Activated B cell treated with CpG ODN at 0.5 μM for 24 hours (primary cell): ENCODE measurements at regions of chr13 and their contacts with region 1.

Region 1: DNA sequence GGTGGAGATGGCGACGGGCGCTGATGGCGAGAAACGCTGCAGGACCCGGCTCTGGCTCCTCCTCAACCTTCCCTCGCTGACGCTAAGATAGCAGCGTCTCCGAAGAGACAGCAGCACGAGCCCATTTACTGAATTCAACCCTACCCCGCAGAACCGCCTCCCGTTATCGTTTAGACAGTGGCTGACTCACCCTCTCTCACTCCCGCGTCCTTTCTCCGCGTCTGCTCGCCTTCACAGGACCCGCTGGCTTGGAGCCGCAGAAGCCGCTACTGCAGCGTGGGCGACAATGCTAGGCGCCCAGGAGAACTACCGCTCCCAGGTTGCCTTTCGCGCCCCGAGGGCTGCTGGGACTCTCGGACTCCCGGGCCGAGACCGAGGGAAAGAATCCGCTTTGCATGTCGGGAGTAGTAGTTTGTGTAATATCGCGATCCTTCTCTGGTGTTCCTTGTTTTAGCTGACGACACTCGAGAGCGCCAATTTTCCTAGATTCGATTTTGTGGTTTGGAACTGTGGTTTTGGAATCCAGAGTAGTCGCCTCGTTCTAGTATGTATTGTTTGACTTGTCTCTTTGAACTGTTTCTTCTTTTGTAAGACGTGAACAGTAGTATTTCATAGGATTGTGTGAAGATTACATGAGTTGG is at the start of gene KBTBD6:
- DNase-seq: peak; percentile 83
- ATAC-seq: peak; percentile 97
- H3K4me3 Mint-ChIP-seq: peak within 1 kb of the TSS; percentile 98
- H3K27ac Mint-ChIP-seq: peak within 1 kb of the TSS; percentile 91
- H3K4me1 Mint-ChIP-seq: peaks cover 47% of the 10 kb centered on the region
- H3K27me3 Mint-ChIP-seq: no peaks in the 10 kb centered on the region
- CTCF ChIP-seq: no peak
- total RNA-seq, gene KBTBD6: 5.1 and 6.0 TPM in 2 replicates

Region 2: DNA sequence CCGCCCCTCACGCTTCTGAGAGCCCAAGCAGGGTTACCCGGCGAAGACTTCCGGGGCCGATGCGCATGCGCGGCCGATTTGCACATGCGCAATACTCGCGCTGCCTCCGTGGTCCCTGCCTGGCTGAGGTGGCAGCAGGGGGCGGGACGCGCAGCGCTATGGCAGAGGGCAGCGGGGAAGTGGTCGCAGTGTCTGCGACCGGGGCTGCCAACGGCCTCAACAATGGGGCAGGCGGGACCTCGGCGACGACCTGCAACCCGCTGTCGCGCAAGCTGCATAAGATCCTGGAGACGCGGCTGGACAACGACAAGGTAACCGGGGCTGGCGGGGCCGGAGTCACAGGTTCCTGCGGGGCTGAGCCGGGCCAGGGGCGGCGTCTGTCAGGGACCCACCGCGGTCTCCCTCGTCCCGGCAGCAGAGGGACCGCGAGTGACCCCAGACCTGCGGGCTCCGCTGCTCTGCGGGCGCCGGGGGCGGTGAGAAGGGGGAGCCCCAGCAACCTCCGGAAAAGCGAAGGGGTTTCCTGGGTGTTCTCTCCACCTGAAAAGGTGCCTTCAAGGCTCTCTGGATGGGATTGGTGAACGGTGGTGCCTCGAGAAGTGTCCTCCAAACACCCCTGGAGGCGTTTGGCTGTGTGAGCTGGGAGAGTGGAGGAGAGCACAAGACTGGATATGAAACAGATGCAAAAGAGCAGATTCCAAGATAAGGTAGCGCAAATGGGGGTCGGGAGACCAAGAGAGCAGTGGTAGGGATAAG is 1476.9 kb before region 1 on chr13 and contains the start of gene COG6:
- CTCF ChIA-PET with region 1: no interaction called
- POLR2A ChIA-PET with region 1: no interaction called
- intact Hi-C with region 1: loop called (anchors 1 kb)
- DNase-seq: peak; percentile 99
- ATAC-seq: peak; percentile 91
- H3K4me3 Mint-ChIP-seq: peak within 1 kb of the TSS; percentile 91
- H3K27ac Mint-ChIP-seq: peak within 1 kb of the TSS; percentile 85
- H3K4me1 Mint-ChIP-seq: peaks cover 26% of the 10 kb centered on the region
- H3K27me3 Mint-ChIP-seq: peaks cover 2% of the 10 kb centered on the region
- CTCF ChIP-seq: no peak
- total RNA-seq, gene COG6: 28.9 and 29.6 TPM in 2 replicates

Region 3: GRCh38 chr13:41075034-41075433 is 57.6 kb before region 1 on chr13:
- CTCF ChIA-PET with region 1: interaction called, 4 read pairs
- POLR2A ChIA-PET with region 1: no interaction called
- intact Hi-C with region 1: loop called (anchors 5 kb)
- DNase-seq: no peak
- ATAC-seq: peak; percentile 58
- H3K4me3 Mint-ChIP-seq: no peak overlapping the region
- H3K27ac Mint-ChIP-seq: no peak overlapping the region
- H3K4me1 Mint-ChIP-seq: no peaks in the 10 kb centered on the region
- H3K27me3 Mint-ChIP-seq: no peaks in the 10 kb centered on the region
- CTCF ChIP-seq: no peak

Region 4: GRCh38 chr13:41193919-41194824 is 61.5 kb after region 1 on chr13 and contains the start of gene KBTBD7:
- CTCF ChIA-PET with region 1: no interaction called
- POLR2A ChIA-PET with region 1: interaction called, 7 read pairs
- intact Hi-C with region 1: loop called (anchors 1 kb)
- DNase-seq: peak; percentile 85
- ATAC-seq: peak; percentile 92
- H3K4me3 Mint-ChIP-seq: peak within 1 kb of the TSS; percentile 93
- H3K27ac Mint-ChIP-seq: peak within 1 kb of the TSS; percentile 94
- H3K4me1 Mint-ChIP-seq: peaks cover 54% of the 10 kb centered on the region
- H3K27me3 Mint-ChIP-seq: no peaks in the 10 kb centered on the region
- CTCF ChIP-seq: no peak
- total RNA-seq, gene KBTBD7: 5.2 and 6.4 TPM in 2 replicates

Region 5: GRCh38 chr13:41199526-41199925 is 66.9 kb after region 1 on chr13:
- CTCF ChIA-PET with region 1: no interaction called
- POLR2A ChIA-PET with region 1: interaction called, 7 read pairs
- intact Hi-C with region 1: loop called (anchors 1 kb)
- DNase-seq: no peak
- ATAC-seq: peak; percentile 90
- H3K4me3 Mint-ChIP-seq: peak overlapping the region; percentile 55
- H3K27ac Mint-ChIP-seq: peak overlapping the region; percentile 87
- H3K4me1 Mint-ChIP-seq: peaks cover 47% of the 10 kb centered on the region
- H3K27me3 Mint-ChIP-seq: no peaks in the 10 kb centered on the region
- CTCF ChIP-seq: no peak

Region 6: GRCh38 chr13:41299316-41300094 is 166.9 kb after region 1 on chr13:
- CTCF ChIA-PET with region 1: no interaction called
- POLR2A ChIA-PET with region 1: no interaction called
- intact Hi-C with region 1: no loop called
- DNase-seq: no peak
- ATAC-seq: no peak
- H3K4me3 Mint-ChIP-seq: no peak overlapping the region
- H3K27ac Mint-ChIP-seq: no peak overlapping the region
- H3K4me1 Mint-ChIP-seq: no peaks in the 10 kb centered on the region
- H3K27me3 Mint-ChIP-seq: no peaks in the 10 kb centered on the region
- CTCF ChIP-seq: no peak

Region 7: GRCh38 chr13:42102961-42103865 is 970.6 kb after region 1 on chr13:
- CTCF ChIA-PET with region 1: no interaction called
- POLR2A ChIA-PET with region 1: no interaction called
- intact Hi-C with region 1: no loop called
- DNase-seq: no peak
- ATAC-seq: no peak
- H3K4me3 Mint-ChIP-seq: no peak overlapping the region
- H3K27ac Mint-ChIP-seq: no peak overlapping the region
- H3K4me1 Mint-ChIP-seq: no peaks in the 10 kb centered on the region
- H3K27me3 Mint-ChIP-seq: no peaks in the 10 kb centered on the region
- CTCF ChIP-seq: no peak